Naive thymus-derived CD4-positive, alpha-beta T cell (primary cell): ENCODE measurements at regions of chr6 and their contacts with region 1.

Region 1: GRCh38 chr6:159042003-159042825 is 2.6 kb downstream of the TAGAP start:
- DNase-seq: peak; percentile 42 to 92 (median 86)
- ATAC-seq: peak; percentile 70
- H3K4me3 ChIP-seq: peak overlapping the region; percentile 88
- H3K4me3 Mint-ChIP-seq: peak overlapping the region; percentile 92 to 100 (median 99)
- H3K27ac ChIP-seq: peak overlapping the region; percentile 92
- H3K27ac Mint-ChIP-seq: peak overlapping the region; percentile 94 to 100 (median 98)
- H3K4me1 ChIP-seq: peaks cover 50 to 58% of the 10 kb centered on the region in 2 donors
- H3K4me1 Mint-ChIP-seq: peaks cover 44 to 68% (median 64%) of the 10 kb centered on the region in 7 donors
- H3K27me3 ChIP-seq: no peaks in the 10 kb centered on the region
- H3K27me3 Mint-ChIP-seq: no peaks in the 10 kb centered on the region

Region 2: GRCh38 chr6:158686791-158687381 is 355.3 kb before region 1 on chr6:
- CTCF ChIA-PET with region 1: no interaction called
- POLR2A ChIA-PET with region 1: no interaction called
- intact Hi-C with region 1: loop called in 1 of 2 experiments (anchors 1 kb)
- DNase-seq: peak; percentile 29 to 92 (median 87)
- ATAC-seq: peak; percentile 96
- H3K4me3 ChIP-seq: peak overlapping the region; percentile 31
- H3K4me3 Mint-ChIP-seq: peak overlapping the region; percentile 66 to 91 (median 79)
- H3K27ac ChIP-seq: peak overlapping the region; percentile 82
- H3K27ac Mint-ChIP-seq: peak overlapping the region; percentile 88 to 100 (median 98)
- H3K4me1 ChIP-seq: peaks cover 28 to 49% of the 10 kb centered on the region in 2 donors
- H3K4me1 Mint-ChIP-seq: peaks cover 36 to 76% (median 70%) of the 10 kb centered on the region in 7 donors
- H3K27me3 ChIP-seq: no peaks in the 10 kb centered on the region
- H3K27me3 Mint-ChIP-seq: no peaks in the 10 kb centered on the region

Region 3: DNA sequence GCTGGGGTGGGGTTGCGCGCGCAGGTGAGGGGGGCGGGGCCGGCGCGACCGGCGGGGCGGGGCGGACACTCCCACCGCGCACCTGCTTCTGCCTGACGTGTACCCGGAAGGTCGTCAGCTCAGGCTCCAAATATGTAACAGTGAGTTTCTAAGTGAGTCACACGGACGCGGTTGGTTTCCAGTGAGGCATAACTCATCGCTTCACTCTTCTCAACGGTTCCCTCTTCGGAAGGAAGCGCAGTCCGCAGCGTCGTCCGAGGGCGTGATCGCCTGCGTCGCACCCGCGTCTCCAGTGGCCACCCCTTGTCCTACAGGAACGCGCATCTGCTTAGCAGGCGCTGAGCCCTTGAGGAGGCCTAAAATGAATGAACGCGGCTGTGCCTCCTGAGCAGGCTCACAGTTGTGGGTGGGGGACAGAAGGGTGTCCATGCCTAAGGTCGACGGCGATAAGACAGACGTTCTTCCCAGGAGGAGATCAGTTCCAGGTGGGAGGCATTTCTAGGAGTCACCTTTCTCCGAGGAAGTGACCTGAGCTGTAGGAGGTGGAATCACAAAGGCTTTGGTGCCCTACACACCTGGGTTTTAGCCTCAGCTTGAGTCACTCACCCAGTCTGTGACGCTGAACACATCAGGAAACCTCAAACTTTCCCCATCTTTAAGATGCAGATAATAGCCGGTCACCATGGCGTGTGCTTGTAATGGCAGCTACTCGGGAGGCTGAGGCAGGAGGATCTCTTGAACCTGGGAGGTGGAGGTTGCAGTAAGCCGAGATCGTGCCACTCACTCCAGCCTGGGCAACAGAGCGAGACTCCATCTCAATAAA is 172.2 kb before region 1 on chr6:
- CTCF ChIA-PET with region 1: no interaction called
- POLR2A ChIA-PET with region 1: no interaction called
- intact Hi-C with region 1: loop called (anchors 1 kb)
- DNase-seq: peak in 1 of 9 donors; percentile 97
- ATAC-seq: peak; percentile 87
- H3K4me3 ChIP-seq: peak overlapping the region; percentile 71
- H3K4me3 Mint-ChIP-seq: peak overlapping the region; percentile 83 to 96 (median 92)
- H3K27ac ChIP-seq: peak overlapping the region; percentile 98
- H3K27ac Mint-ChIP-seq: peak overlapping the region; percentile 98 to 100 (median 100)
- H3K4me1 ChIP-seq: peaks cover 16 to 18% of the 10 kb centered on the region in 2 donors
- H3K4me1 Mint-ChIP-seq: peaks cover 7 to 45% (median 25%) of the 10 kb centered on the region in 7 donors
- H3K27me3 ChIP-seq: no peaks in the 10 kb centered on the region
- H3K27me3 Mint-ChIP-seq: peaks cover 0 to 5% (median 0%) of the 10 kb centered on the region in 5 donors

Region 4: DNA sequence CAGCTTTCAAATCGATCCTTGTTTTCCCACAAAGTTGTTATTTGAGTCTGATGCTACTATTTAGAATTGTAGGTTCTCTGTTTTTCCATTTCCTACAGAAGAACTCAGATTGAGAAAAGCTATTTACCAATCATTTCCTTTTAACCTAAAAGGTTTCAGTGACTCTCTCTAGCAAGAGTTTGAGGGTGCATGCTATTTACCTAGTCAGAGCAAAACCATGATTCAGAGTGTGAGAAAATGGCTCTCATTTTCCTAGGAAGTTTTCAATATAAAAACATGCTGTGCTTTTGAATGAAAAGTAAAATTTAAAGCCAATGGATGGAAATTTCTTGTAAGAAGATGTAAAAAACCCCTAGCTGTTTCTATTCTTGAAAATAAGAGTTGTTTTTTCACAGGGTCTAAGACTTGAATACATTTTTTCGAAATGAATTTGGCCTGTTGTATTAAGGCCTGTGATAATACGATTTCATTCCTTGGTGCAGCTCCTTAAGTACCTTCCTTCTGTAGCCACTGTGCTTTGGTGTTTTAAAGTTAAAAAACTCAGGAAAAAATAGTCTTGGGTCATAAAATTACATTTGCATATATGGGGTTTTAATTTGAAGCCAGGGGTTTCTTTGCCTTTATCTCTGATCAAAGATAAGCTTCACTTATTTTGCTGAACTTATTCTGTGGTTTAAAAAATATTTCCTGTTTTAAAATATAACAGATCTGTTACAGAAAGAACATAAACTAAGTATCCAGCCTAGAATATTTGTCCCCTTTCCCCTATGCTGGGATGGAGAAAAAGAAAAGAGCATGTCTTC is 24.3 kb before region 1 on chr6:
- CTCF ChIA-PET with region 1: interaction called, 67 read pairs
- POLR2A ChIA-PET with region 1: interaction called, 12 read pairs
- intact Hi-C with region 1: loop called (anchors 2 kb)
- DNase-seq: no peak
- ATAC-seq: no peak
- H3K4me3 ChIP-seq: no peak overlapping the region
- H3K4me3 Mint-ChIP-seq: peak overlapping the region in 9 of 10 donors; percentile 11 to 70 (median 53)
- H3K27ac ChIP-seq: peak overlapping the region; percentile 52
- H3K27ac Mint-ChIP-seq: peak overlapping the region; percentile 28 to 92 (median 69)
- H3K4me1 ChIP-seq: peaks cover 30 to 46% of the 10 kb centered on the region in 2 donors
- H3K4me1 Mint-ChIP-seq: peaks cover 16 to 50% (median 46%) of the 10 kb centered on the region in 7 donors
- H3K27me3 ChIP-seq: no peaks in the 10 kb centered on the region
- H3K27me3 Mint-ChIP-seq: no peaks in the 10 kb centered on the region

Region 5: DNA sequence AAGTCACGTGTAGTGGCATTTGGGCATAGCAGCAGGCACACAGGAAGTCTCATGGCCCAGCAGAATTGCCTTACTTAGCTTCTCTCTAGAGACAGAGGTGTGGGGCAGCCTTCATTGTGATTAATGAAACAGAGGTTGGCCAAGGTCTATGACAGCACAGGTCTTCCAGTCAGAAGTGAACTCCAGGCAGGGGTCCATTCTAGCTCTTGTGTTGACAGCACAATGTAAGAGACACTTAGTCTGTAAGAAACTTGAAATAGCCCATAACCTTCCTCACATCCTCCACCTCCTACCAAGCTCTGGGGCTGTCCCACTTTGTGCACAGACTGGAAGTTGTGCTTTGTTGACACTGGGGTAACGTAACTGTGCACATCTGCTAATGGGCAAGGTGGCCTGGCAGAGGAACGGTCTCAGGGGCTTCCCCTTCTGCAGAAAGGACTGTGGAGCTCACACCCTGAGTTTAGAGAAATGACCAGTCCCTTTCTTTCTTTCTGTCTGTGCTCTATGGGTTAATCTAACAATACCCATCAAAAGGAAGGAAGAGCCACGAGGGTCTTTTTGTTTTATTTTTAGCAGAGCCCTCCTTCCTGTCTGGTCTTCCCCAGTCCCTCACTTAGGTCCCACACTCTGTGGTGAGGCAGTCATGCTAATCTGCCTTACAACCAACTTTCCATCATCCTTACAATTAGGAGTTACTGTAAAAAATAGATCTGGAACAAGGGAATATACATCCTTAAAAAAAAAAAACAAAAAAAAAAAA is 38.2 kb after region 1 on chr6:
- CTCF ChIA-PET with region 1: interaction called, 3 read pairs
- POLR2A ChIA-PET with region 1: interaction called, 15 read pairs
- intact Hi-C with region 1: loop called in 1 of 2 experiments (anchors 1 kb)
- DNase-seq: no peak
- ATAC-seq: peak; percentile 63
- H3K4me3 ChIP-seq: no peak overlapping the region
- H3K4me3 Mint-ChIP-seq: peak overlapping the region in 3 of 10 donors; percentile 28 to 47 (median 32)
- H3K27ac ChIP-seq: no peak overlapping the region
- H3K27ac Mint-ChIP-seq: peak overlapping the region in 6 of 9 donors; percentile 9 to 86 (median 68)
- H3K4me1 ChIP-seq: peaks cover 8 to 22% of the 10 kb centered on the region in 2 donors
- H3K4me1 Mint-ChIP-seq: peaks cover 16 to 43% (median 29%) of the 10 kb centered on the region in 7 donors
- H3K27me3 ChIP-seq: no peaks in the 10 kb centered on the region
- H3K27me3 Mint-ChIP-seq: peaks cover 0 to 7% (median 0%) of the 10 kb centered on the region in 5 donors

Region 6: GRCh38 chr6:159134701-159135364 is 92.6 kb after region 1 on chr6:
- CTCF ChIA-PET with region 1: interaction called, 15 read pairs
- POLR2A ChIA-PET with region 1: interaction called, 5 read pairs
- intact Hi-C with region 1: loop called (anchors 1 kb)
- DNase-seq: peak; percentile 46 to 77 (median 68)
- ATAC-seq: peak; percentile 96
- H3K4me3 ChIP-seq: no peak overlapping the region
- H3K4me3 Mint-ChIP-seq: no peak overlapping the region
- H3K27ac ChIP-seq: no peak overlapping the region
- H3K27ac Mint-ChIP-seq: no peak overlapping the region
- H3K4me1 ChIP-seq: no peaks in the 10 kb centered on the region
- H3K4me1 Mint-ChIP-seq: peaks cover 0 to 9% (median 0%) of the 10 kb centered on the region in 7 donors
- H3K27me3 ChIP-seq: no peaks in the 10 kb centered on the region
- H3K27me3 Mint-ChIP-seq: peaks cover 0 to 42% (median 7%) of the 10 kb centered on the region in 5 donors